Mammary epithelial cell (primary cell): ENCODE measurements at regions of chr15 and their contacts with region 1.

Region 1: DNA sequence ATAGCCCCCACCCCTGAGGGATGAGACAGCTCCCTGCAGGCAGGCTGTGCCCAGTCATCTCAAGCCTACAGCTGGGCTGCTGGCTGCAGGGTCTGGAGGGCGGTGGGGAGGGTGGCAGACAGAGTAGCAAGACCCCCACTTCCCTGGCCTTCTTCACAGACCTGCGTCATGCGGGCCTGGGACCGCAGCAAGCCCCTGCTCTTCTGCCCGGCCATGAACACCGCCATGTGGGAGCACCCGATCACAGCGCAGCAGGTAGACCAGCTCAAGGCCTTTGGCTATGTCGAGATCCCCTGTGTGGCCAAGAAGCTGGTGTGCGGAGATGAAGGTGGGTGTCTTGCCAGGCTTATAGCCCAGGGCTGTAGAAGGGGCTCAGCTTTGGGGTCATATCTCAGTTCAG is 25.0 kb downstream of the PPCDC start:
- DNase-seq: no peak
- H3K4me3 ChIP-seq: no peak overlapping the region
- H3K27ac ChIP-seq: no peak overlapping the region
- H3K4me1 ChIP-seq: peaks cover 15% of the 10 kb centered on the region
- H3K27me3 ChIP-seq: no peaks in the 10 kb centered on the region
- CTCF ChIP-seq: no peak

Region 2: DNA sequence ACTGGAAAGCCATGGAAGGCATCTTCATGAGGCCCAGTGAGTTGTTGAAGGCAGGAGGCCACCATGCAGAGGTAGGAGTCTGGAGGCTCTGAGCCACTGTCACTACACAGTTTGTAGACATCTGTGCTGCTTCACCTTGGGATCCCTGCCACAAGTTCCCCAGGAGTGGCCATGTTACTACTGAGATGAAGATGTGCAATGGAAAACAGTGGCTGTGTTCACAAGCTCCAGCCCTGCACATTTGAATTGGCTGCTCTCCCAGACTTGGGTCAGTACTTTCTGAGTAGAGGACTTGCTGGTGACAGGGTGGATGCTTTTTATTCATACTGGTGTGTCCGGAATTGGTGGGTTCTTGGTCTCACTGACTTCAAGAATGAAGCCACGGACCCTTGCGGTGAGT is 66.4 kb after region 1 on chr15:
- CTCF ChIA-PET with region 1: no interaction called
- dilution Hi-C with region 1: no loop called
- in situ Hi-C with region 1: no loop called
- intact Hi-C with region 1: no loop called
- DNase-seq: no peak
- H3K4me3 ChIP-seq: no peak overlapping the region
- H3K27ac ChIP-seq: no peak overlapping the region
- H3K4me1 ChIP-seq: no peaks in the 10 kb centered on the region
- H3K27me3 ChIP-seq: peaks cover 3% of the 10 kb centered on the region
- CTCF ChIP-seq: no peak

Region 3: GRCh38 chr15:75130597-75131268 is 82.3 kb after region 1 on chr15:
- CTCF ChIA-PET with region 1: interaction called, 13 read pairs
- dilution Hi-C with region 1: no loop called
- in situ Hi-C with region 1: no loop called
- intact Hi-C with region 1: no loop called
- DNase-seq: no peak
- H3K4me3 ChIP-seq: no peak overlapping the region
- H3K27ac ChIP-seq: no peak overlapping the region
- H3K4me1 ChIP-seq: no peaks in the 10 kb centered on the region
- H3K27me3 ChIP-seq: no peaks in the 10 kb centered on the region
- CTCF ChIP-seq: no peak

Region 4: DNA sequence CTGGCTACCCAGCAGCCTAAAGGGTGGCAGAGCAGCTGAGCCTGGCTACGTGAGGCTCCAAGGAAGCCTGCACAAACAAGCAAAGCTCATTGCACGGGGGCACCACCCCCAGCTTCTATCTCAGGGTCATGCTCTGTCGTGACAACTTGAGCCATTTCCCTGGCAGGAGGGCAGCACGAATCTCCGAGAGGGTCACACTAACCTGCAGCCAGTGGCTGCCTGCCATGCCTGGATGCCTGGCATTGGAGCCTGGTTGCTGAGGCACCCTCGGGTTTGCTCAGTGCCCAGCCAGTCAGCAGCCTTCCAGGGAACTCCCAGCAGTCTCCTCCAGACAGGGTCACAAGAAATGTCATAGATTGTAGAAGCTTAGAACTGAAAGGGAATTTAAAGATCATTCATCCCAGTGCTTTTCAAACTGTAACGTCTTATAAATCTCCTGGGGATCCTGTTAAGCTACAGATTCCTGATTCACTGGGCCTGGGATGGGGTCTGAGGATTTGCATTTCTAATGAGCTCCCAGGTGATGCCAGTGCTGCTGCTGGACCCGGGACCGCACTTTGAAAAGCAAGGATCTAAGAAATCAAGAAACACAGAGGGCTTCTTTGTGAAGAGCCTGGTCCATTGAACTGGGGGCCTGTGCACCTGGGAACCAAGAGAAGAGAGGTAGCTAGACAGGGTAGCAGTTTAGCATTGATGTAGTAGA is 1059.8 kb after region 1 on chr15:
- CTCF ChIA-PET with region 1: interaction called, 15 read pairs
- dilution Hi-C with region 1: no loop called
- in situ Hi-C with region 1: no loop called
- intact Hi-C with region 1: no loop called
- DNase-seq: no peak
- H3K4me3 ChIP-seq: no peak overlapping the region
- H3K27ac ChIP-seq: no peak overlapping the region
- H3K4me1 ChIP-seq: peaks cover 5% of the 10 kb centered on the region
- H3K27me3 ChIP-seq: no peaks in the 10 kb centered on the region
- CTCF ChIP-seq: no peak